ENCODE measurements at regions of chr10 and their contacts with region 1.

Region 1: DNA sequence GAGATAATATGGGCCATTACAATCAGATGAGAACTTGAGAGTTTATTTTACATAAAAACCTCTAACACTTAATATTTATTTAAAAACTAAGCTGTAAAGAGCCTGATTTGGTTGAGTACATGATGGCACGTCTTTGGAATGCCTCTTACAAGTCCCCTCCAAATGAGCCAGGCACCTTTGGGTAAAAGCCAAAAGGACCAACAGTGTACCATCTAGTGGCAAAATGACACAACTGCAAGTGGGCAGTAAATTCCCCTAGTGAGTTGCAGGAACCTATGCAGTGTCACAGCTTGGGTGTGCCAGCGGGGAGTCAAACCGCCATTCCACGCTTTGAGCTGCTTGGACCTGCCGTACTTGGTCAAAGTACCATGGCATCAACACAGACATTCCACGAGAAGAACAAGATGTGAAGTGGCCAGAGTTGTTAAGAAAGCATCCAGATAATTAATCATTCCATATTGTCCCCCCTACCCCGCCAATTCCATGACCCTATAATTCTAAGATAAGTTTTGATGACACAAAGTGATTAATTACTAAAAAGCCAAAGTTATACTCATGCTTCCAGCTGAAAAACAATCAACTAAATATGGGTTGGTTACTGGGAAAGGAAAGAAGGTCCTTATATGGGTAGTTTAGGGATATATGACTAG is 115.2 kb downstream of the SORBS1 start:
- DNase-seq: peak; percentile 67
- ATAC-seq: peak; percentile 92
- H3K4me3 Mint-ChIP-seq: no peak overlapping the region
- H3K27ac Mint-ChIP-seq: no peak overlapping the region
- H3K4me1 Mint-ChIP-seq: peaks cover 15% of the 10 kb centered on the region
- H3K27me3 Mint-ChIP-seq: no peaks in the 10 kb centered on the region
- CTCF ChIP-seq: peak; percentile 74

Region 2: GRCh38 chr10:95279042-95279820 is 166.7 kb before region 1 on chr10:
- CTCF ChIA-PET with region 1: no interaction called
- POLR2A ChIA-PET with region 1: no interaction called
- DNase-seq: no peak
- ATAC-seq: no peak
- H3K4me3 Mint-ChIP-seq: no peak overlapping the region
- H3K27ac Mint-ChIP-seq: peak overlapping the region; percentile 85
- H3K4me1 Mint-ChIP-seq: peaks cover 72% of the 10 kb centered on the region
- H3K27me3 Mint-ChIP-seq: no peaks in the 10 kb centered on the region
- CTCF ChIP-seq: no peak

Region 3: DNA sequence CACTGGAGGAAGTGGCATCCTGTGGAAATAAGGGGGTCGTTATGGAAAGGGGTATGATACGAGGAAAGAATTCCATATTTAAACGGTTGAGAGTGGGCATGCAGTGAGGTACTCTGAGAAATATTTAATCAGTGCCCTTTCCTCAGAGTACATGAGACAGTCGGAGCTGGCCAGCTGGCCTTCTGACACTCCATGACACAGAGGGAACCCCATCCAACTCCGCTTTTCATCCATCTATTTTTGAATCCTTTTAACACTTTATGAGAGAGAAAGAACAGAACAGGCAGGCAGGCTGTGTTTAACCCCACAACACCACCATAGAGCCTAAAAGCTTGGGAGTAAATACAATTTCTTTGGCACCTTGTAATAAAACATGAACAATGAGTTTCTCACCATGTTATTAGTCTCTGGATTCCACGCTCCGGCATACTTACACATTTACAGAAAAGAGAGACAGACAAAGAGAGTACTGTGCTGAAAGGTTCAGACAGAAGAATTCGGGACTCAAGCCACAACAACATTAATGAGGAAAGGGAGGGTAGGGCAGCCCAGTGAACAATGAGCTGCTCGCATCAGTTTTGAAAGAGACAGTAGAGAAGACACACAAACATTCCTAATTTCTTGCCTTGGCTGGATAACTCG is 31.0 kb before region 1 on chr10:
- CTCF ChIA-PET with region 1: no interaction called
- POLR2A ChIA-PET with region 1: no interaction called
- DNase-seq: no peak
- ATAC-seq: no peak
- H3K4me3 Mint-ChIP-seq: no peak overlapping the region
- H3K27ac Mint-ChIP-seq: peak overlapping the region; percentile 85
- H3K4me1 Mint-ChIP-seq: peaks cover 43% of the 10 kb centered on the region
- H3K27me3 Mint-ChIP-seq: no peaks in the 10 kb centered on the region
- CTCF ChIP-seq: no peak

Region 4: GRCh38 chr10:95459446-95460045 is 13.6 kb after region 1 on chr10:
- CTCF ChIA-PET with region 1: interaction called, 11 read pairs
- POLR2A ChIA-PET with region 1: no interaction called
- DNase-seq: no peak
- ATAC-seq: peak; percentile 43
- H3K4me3 Mint-ChIP-seq: no peak overlapping the region
- H3K27ac Mint-ChIP-seq: peak overlapping the region; percentile 69; the same call in 1 of the 2 replicates
- H3K4me1 Mint-ChIP-seq: peaks cover 62% of the 10 kb centered on the region
- H3K27me3 Mint-ChIP-seq: no peaks in the 10 kb centered on the region
- CTCF ChIP-seq: no peak

Region 5: DNA sequence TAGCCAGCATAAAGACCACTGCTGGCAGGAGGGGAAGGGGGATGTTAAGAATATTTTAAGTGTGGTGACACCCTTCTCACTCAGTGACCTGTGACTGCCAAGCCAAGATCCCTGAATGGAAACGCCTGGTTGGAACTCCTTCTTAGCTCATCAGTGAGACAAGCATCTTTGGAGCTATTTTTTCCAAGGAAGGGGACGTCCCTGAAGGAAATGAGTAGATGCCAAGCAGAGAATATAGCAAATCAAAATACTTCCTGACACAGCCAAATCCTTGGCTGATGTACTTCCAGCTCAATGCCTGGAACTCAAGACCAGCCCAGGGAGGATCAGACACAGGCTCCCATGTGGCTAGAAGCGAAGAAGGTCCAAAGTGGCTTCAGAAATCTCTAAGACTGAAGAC is 33.0 kb after region 1 on chr10:
- CTCF ChIA-PET with region 1: interaction called, 10 read pairs
- POLR2A ChIA-PET with region 1: no interaction called
- DNase-seq: no peak
- ATAC-seq: no peak
- H3K4me3 Mint-ChIP-seq: no peak overlapping the region
- H3K27ac Mint-ChIP-seq: no peak overlapping the region
- H3K4me1 Mint-ChIP-seq: peaks cover 69% of the 10 kb centered on the region
- H3K27me3 Mint-ChIP-seq: no peaks in the 10 kb centered on the region
- CTCF ChIP-seq: no peak

Measured in WTC11 (cell line).